ENCODE measurements at regions of chr1 and their contacts with region 1.

Region 1: GRCh38 chr1:38489844-38490270 is 369.7 kb downstream of the RRAGC start:
- DNase-seq: no peak
- H3K4me3 ChIP-seq: no peak overlapping the region
- CTCF ChIP-seq: peak; percentile 49

Region 2: GRCh38 chr1:38392861-38393260 is 97.0 kb before region 1 on chr1:
- in situ Hi-C with region 1: loop called (anchors 5 kb)
- DNase-seq: no peak
- H3K4me3 ChIP-seq: no peak overlapping the region
- CTCF ChIP-seq: no peak

Region 3: GRCh38 chr1:38418195-38419030 is 71.4 kb before region 1 on chr1:
- in situ Hi-C with region 1: no loop called
- DNase-seq: peak; percentile 15
- H3K4me3 ChIP-seq: no peak overlapping the region
- CTCF ChIP-seq: no peak

Region 4: DNA sequence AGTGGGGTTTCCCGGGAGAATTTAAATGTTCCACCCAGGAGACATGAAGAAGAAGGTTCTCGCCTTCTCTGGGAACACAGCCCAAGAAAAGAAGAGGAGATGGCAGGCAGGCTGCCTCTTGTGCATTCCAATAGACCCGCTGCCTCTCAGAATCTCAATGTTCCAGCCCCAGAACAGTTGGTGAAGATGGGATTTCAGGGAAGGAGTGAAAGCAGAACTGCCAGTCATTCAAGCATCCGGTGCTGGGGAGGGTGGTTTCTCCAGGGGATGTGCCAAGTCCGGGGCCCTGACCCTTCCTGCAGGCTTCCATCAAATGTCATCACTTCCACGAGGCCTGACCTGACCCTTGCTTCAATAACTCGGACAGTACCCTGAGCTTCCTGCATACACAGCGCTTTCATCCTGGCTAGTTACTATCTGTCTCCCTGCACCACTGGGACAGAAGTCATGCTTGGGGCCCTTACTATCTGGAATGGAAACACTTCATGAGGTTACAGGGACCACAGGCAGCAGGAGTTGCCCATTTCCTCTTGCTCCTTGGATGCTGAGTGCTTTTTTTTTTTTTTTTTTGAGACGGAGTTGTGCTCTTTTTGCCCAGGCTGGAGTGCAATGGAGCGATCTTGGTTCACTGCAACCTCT is 56.7 kb before region 1 on chr1:
- in situ Hi-C with region 1: no loop called
- DNase-seq: no peak
- H3K4me3 ChIP-seq: no peak overlapping the region
- CTCF ChIP-seq: no peak

Region 5: DNA sequence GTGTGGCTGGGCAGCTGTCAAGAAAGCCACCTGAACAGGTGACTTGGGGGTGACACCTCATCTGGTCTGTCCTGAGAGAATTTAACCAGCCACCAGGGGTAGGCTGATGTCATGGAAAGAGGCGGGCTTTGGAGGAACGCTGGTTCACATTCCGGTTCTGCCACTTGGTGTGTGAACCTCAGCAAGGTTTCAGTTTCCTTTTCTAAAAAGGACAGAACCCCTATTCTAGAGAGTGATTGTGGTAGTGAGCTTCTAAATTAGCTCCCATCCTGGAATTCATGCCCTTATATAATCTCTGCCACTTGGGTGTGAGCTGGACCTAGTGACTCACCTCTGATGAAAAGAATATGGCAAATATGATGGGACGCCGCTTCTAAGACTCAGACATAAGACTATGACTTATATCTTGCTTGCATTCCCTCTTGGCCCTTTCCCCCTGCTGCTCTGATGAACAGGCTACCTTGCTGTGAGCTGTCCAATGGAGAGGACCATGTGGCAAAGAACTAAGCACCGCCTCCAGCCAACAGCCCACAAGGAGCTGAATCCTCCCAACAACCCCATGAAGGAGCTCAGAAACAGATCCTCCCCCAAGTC is 37.6 kb after region 1 on chr1:
- in situ Hi-C with region 1: no loop called
- DNase-seq: no peak
- H3K4me3 ChIP-seq: no peak overlapping the region
- CTCF ChIP-seq: no peak

Measured in astrocyte of the cerebellum (primary cell).